CD8-positive, alpha-beta memory T cell (primary cell): ENCODE measurements at regions of chr5 and their contacts with region 1.

Region 1: DNA sequence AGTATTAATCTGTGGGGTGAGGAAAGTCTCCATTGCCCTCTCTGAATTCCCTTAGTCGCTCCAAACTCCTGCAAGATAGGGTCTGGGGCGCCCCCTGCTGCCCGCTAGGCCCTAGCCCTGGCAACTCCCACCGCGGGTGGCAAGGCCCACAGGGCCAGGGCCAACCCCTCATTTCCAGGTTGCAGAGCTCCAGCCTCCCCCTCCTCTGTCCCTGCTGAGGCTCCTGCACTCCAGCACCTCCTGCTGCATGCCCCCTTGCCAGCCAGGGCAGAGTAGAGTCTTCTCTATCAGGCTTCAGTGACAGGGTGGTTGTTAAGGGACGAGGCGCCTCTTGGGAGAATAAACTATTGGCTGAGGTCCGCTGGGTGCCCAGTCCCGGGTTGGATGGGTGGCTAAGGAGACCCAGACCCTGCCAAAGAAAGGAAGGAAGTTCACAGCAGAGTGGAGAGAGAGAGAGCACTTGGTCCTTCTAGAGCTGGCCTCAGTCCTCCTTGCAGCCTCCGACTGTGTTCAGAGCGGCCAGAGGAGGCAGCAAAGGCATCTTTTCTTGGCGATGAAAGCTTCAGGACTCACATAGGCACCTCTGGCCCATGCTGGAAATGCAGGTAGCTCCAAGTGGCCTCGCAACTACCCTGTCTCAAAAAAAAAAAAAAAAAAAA is 45.6 kb downstream of the SAR1B start:
- DNase-seq: peak; percentile 68 to 85 (median 73)
- H3K4me3 ChIP-seq: no peak overlapping the region
- H3K4me3 Mint-ChIP-seq: peak overlapping the region in 2 of 7 donors; percentile 37 to 51
- H3K27ac ChIP-seq: no peak overlapping the region
- H3K27ac Mint-ChIP-seq: peak overlapping the region in 3 of 8 donors; percentile 32 to 63 (median 40)
- H3K4me1 ChIP-seq: peaks cover 5% of the 10 kb centered on the region
- H3K4me1 Mint-ChIP-seq: peaks cover 7 to 12% (median 9%) of the 10 kb centered on the region in 3 donors
- H3K27me3 ChIP-seq: no peaks in the 10 kb centered on the region
- H3K27me3 Mint-ChIP-seq: no peaks in the 10 kb centered on the region

Region 2: DNA sequence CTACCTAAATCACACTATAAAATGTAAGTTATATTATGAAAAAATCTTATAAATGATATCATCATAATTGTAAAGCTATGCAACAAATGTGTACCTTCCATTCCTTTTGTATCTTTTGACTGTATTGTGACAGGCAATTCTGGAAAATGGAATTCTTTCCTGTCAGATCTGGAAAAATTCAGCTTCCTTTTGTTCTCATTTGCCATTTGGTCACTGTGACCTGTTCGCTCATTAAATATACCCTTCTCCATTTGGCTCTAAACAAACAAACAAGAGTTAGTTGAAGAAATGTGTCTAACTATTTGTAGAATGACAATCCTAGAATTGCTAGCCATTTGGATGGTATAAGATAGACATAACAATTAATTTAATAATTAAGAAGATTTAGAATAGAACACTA is 282.7 kb before region 1 on chr5:
- CTCF ChIA-PET with region 1: interaction called, 22 read pairs
- POLR2A ChIA-PET with region 1: no interaction called
- DNase-seq: no peak
- H3K4me3 ChIP-seq: no peak overlapping the region
- H3K4me3 Mint-ChIP-seq: no peak overlapping the region
- H3K27ac ChIP-seq: no peak overlapping the region
- H3K27ac Mint-ChIP-seq: no peak overlapping the region
- H3K4me1 ChIP-seq: no peaks in the 10 kb centered on the region
- H3K4me1 Mint-ChIP-seq: no peaks in the 10 kb centered on the region
- H3K27me3 ChIP-seq: no peaks in the 10 kb centered on the region
- H3K27me3 Mint-ChIP-seq: peaks cover 0 to 4% of the 10 kb centered on the region in 2 donors

Region 3: DNA sequence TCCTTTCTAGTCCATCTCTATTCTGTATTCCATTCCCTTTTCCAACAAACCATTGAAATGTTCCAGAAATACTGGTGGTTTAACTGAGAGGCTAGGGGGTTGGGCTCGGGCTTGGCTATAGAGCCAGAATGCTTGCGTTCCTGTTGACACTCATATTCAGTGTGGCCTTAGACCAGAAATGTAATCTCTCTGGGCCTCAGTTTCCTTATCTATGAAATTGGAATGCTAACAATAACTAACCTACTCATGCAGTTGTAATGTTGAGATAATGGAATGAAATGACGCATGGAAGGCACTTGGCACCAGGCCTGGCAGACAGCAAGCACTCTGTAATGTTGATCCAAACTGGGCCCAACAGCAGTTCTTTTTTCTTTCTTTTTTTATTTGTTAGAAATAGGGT is 34.7 kb before region 1 on chr5:
- CTCF ChIA-PET with region 1: no interaction called
- POLR2A ChIA-PET with region 1: no interaction called
- DNase-seq: no peak
- H3K4me3 ChIP-seq: no peak overlapping the region
- H3K4me3 Mint-ChIP-seq: no peak overlapping the region
- H3K27ac ChIP-seq: no peak overlapping the region
- H3K27ac Mint-ChIP-seq: peak overlapping the region in 5 of 8 donors; percentile 17 to 91 (median 70)
- H3K4me1 ChIP-seq: peaks cover 59% of the 10 kb centered on the region
- H3K4me1 Mint-ChIP-seq: peaks cover 60 to 83% (median 66%) of the 10 kb centered on the region in 3 donors
- H3K27me3 ChIP-seq: no peaks in the 10 kb centered on the region
- H3K27me3 Mint-ChIP-seq: peaks cover 0 to 1% of the 10 kb centered on the region in 2 donors

Region 4: DNA sequence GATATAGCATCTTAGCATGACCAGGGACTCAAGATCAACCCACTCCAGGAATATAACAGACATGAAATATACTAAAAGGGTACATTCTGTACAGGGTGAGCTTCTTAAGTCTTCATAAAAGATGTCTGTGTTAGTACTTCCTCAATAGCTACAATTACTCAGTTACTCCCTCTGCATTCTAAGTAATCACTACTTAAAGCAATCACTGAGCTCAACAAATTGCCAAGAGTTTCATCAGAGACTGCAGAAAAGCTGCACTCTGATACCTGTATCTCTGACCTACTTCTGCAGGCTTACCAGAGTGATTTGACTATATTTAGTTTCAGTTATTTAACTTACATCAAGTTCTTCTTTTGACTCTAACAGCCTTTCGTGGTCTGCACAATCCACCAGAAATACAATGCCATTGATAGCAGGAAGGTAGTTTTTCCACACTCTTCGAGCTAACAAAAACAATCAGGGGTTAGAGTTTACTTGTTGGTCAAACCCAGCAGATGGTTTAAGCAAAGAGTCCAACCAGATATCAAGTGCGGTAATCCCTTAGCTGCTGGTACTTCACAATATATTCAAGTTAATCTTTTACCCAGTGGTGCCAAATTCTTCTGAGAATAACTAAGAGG is 22.3 kb after region 1 on chr5:
- CTCF ChIA-PET with region 1: interaction called, 13 read pairs
- POLR2A ChIA-PET with region 1: no interaction called
- DNase-seq: no peak
- H3K4me3 ChIP-seq: no peak overlapping the region
- H3K4me3 Mint-ChIP-seq: no peak overlapping the region
- H3K27ac ChIP-seq: no peak overlapping the region
- H3K27ac Mint-ChIP-seq: peak overlapping the region in 6 of 8 donors; percentile 1 to 80 (median 48)
- H3K4me1 ChIP-seq: no peaks in the 10 kb centered on the region
- H3K4me1 Mint-ChIP-seq: peaks cover 0 to 9% (median 2%) of the 10 kb centered on the region in 3 donors
- H3K27me3 ChIP-seq: no peaks in the 10 kb centered on the region
- H3K27me3 Mint-ChIP-seq: no peaks in the 10 kb centered on the region